Testis (tissue), 5 donors: ENCODE measurements at regions of chr12 and their contacts with region 1.

Region 1: DNA sequence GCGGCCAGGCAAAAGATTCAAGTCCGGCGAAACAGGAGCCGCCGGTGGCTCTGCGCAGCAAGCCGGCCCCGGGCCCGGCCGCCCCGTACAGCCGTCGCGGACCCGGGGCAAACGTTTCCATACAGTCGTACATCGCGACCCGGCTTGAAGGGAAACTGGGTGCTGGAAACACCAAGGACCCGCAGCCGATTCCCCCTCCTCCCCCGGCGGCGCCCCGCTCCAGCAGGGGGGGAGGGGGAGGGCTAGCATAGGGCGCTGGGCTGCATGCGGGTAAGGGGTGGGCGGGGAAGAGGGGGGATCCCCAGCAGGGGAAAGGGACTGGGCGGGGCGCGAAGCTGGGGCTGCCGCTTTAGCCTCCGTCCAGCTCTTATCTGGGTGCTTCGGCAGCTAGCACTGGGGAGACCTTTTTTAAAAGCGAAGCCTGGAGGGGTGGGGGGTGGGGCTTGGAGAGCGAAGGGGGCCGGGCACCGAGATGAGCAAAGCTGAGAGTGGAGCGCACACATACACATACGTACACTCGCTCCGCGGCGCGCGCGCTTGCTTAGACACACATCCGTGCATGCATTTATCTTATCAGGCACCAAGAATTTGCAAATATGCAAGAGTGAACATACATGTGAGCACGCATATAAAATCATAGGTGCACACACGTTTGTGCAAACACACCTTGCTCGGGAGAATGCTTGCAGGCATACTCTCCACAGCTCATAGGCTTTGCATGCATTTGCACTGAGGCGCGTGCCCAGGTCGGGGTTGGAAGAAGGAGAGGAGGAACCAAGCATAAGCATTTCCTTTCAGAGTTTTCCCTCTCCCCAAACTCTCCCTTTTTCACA is 11.8 kb downstream of the RARG start:
- DNase-seq: peak; percentile 63
- H3K4me3 ChIP-seq: peak overlapping the region; percentile 54 to 59
- H3K27ac ChIP-seq: peak overlapping the region; percentile 63 to 95
- H3K4me1 ChIP-seq: peaks cover 22% of the 10 kb centered on the region
- H3K27me3 ChIP-seq: no peaks in the 10 kb centered on the region
- CTCF ChIP-seq: no peak
- POLR2A ChIP-seq: no peak

Region 2: GRCh38 chr12:53251477-53252348 is 31.5 kb after region 1 on chr12:
- intact Hi-C with region 1: loop called (anchors 5 kb)
- DNase-seq: peak; percentile 82
- H3K4me3 ChIP-seq: peak overlapping the region; percentile 82 to 94
- H3K27ac ChIP-seq: peak overlapping the region; percentile 84 to 93
- H3K4me1 ChIP-seq: peaks cover 20% of the 10 kb centered on the region
- H3K27me3 ChIP-seq: no peaks in the 10 kb centered on the region
- CTCF ChIP-seq: peak in 2 of 3 experiments; percentile 20 to 36
- POLR2A ChIP-seq: no peak

Region 3: DNA sequence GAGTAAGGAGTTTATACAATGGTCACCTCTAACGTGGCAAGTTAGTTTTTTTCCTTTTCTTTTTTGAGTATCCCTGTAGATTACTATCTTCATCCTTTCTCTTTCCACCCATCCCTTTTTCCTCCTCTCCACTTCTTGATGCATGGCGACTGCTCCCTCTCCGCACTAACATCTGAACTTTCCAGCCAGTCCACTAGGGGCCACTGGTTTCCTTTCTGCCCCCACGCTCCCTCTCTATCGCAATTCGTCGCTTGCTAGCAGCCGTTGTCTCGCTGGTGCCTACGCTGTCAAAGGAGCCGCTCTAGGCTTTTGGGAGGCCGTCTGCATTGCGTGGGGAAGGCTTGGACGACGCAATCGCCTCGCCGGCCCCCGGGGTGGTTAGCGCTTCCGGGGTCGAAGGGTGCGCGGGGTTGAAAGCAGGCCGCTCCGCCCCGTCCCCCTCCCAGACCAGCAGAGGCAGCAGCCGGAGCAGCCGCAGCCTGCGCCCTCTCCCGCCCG is 231.5 kb after region 1 on chr12 and contains the start of gene PCBP2:
- intact Hi-C with region 1: no loop called
- DNase-seq: peak; percentile 99
- H3K4me3 ChIP-seq: peak within 1 kb of the TSS; percentile 91 to 95
- H3K27ac ChIP-seq: peak within 1 kb of the TSS; percentile 99
- H3K4me1 ChIP-seq: peaks cover 19% of the 10 kb centered on the region
- H3K27me3 ChIP-seq: no peaks in the 10 kb centered on the region
- CTCF ChIP-seq: peak; percentile 82 to 98 (median 97)
- POLR2A ChIP-seq: no peak
- total RNA-seq, gene PCBP2: 553 to 632 TPM